Activated CD8-positive, alpha-beta memory T cell treated with anti-CD3 and anti-CD28 coated beads, Interleukin-2, amount 10 ng/mL, durations not matched to agents 7 days and 5 days (primary cell): ENCODE measurements at regions of chr4 and their contacts with region 1.

Region 1: GRCh38 chr4:1693129-1693896 is 9.2 kb upstream of the FAM53A start:
- DNase-seq: peak; percentile 82
- ATAC-seq: peak; percentile 93
- H3K4me3 Mint-ChIP-seq: no peak overlapping the region
- H3K27ac Mint-ChIP-seq: peak overlapping the region; percentile 74
- H3K4me1 Mint-ChIP-seq: peaks cover 4% of the 10 kb centered on the region
- H3K27me3 Mint-ChIP-seq: no peaks in the 10 kb centered on the region

Region 2: DNA sequence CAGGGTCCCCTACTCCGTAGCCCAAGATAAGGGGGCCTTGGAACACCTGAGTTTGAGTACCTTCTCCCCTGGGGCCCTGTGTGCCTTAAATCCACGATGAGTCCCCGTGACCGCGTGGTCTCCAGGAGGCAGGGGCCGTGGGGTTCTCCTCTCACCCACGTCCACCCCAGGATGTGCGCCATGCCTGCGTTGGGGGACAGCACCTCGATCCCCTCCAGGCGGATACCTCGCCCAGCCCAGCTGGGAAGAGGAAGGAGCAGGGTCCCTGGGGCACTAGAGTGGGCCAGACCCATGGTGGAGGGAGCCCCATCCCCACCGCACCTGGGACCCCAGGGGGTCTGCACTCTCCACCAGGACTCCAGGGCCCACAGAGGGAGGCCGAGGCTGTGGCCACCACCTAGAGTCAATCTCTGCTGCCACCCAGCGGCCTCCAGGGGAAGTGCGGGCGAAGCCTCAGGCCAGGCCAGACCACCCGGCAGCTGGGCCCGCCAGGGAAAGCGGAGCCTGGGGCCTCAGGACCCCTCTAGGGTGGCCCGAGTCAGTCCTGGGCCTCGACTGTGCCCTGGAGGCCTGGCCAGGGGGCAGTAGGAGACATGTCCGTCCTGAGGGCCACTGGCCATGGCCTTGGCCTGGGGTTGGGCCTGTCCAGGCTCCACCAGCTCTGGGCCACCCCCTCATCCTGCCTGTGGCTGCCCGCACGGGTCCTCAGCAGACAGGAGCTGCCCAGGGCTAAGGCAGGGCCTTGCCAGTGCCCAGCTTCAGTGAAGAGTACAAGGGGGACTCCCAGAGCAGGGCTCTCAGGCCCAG is 64.2 kb before region 1 on chr4:
- CTCF ChIA-PET with region 1: no interaction called
- DNase-seq: peak; percentile 78
- ATAC-seq: peak; percentile 85
- H3K4me3 Mint-ChIP-seq: no peak overlapping the region
- H3K27ac Mint-ChIP-seq: no peak overlapping the region
- H3K4me1 Mint-ChIP-seq: no peaks in the 10 kb centered on the region
- H3K27me3 Mint-ChIP-seq: no peaks in the 10 kb centered on the region

Region 3: DNA sequence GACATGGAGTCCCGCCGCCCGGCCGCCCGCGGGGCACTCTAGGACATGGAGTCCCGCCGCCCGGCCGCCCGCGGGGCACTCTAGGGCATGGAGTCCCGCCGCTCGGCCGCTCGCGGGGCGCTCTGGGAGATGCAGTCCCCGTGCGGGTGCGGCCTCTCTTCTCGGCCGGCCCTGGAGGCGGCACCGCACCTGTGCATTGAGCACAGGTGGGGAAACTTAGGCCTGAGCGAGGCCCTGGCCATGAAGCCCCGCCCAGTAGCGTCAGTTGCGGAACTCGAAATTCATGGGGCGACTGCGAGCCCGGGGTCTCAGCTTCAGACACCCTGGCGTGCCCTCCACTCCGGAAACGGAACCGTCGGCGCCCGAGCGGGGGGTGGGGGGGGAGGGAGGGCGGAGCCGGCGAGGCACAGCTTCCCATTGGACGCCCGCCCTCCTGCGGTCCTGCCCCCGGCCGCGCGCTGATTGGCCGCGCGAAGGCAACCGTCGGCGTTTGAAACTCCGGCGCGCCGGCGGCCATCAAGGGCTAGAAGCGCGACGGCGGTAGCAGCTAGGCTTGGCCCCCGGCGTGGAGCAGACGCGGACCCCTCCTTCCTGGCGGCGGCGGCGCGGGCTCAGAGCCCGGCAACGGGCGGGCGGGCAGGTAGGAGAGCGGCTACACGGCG is 27.8 kb after region 1 on chr4 and contains the starts of genes TACC3 and TMEM129:
- CTCF ChIA-PET with region 1: interaction called, 278 read pairs
- DNase-seq: peak; percentile 97
- ATAC-seq: peak; percentile 84
- H3K4me3 Mint-ChIP-seq: peak within 1 kb of the TSS; percentile 99
- H3K27ac Mint-ChIP-seq: peak within 1 kb of the TSS; percentile 98
- H3K4me1 Mint-ChIP-seq: peaks cover 52% of the 10 kb centered on the region
- H3K27me3 Mint-ChIP-seq: no peaks in the 10 kb centered on the region
- total RNA-seq, gene TACC3: 246 to 315 TPM
- total RNA-seq, gene TMEM129: 22.5 to 24.7 TPM